ENCODE measurements at regions of chr4 and their contacts with region 1.

Region 1: DNA sequence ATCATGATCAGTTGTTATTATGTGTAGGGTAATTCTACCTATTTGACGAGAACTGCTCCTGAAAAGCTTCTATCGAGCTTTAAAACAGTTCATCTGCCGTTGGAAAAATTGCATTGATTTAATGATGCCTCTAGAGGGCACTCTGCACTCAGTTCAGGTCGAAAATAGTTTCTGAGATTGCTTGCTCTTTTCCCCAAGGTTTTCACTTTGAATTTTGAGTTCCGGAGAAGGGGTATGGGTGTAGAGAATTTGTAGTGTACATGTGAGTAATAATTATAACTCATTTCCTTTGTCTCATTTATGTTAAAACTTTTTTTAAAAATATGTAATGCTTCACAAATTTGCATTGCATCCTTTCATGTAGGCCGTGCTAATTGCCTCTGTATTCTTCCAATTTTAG is 28.4 kb upstream of the TNIP3 start:
- DNase-seq: peak; percentile 37
- H3K4me3 Mint-ChIP-seq: peak overlapping the region; percentile 9
- H3K27ac Mint-ChIP-seq: no peak overlapping the region
- H3K4me1 Mint-ChIP-seq: peaks cover 44% of the 10 kb centered on the region
- H3K27me3 Mint-ChIP-seq: no peaks in the 10 kb centered on the region

Region 2: DNA sequence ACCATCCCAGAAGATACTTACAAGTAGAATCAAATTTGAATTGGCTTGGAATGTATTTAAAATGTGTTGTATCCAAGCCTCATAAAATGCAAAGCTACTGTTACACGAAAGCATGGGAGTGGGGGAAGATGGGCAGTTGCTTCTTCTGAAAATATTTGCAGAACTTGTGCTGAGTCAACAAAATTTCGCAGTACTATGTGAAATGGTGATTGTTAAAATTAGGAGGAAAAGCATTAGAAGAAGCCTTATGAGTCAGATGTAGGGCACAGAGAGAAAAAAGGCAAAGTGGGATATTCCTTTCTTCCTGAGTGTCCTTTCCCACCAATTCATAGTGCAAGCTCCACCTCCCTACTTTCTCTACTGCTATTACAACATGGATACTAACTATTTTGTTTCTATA is 602.7 kb before region 1 on chr4:
- CTCF ChIA-PET with region 1: no interaction called
- intact Hi-C with region 1: no loop called
- DNase-seq: no peak
- H3K4me3 Mint-ChIP-seq: no peak overlapping the region
- H3K27ac Mint-ChIP-seq: no peak overlapping the region
- H3K4me1 Mint-ChIP-seq: no peaks in the 10 kb centered on the region
- H3K27me3 Mint-ChIP-seq: peaks cover 12% of the 10 kb centered on the region

Region 3: DNA sequence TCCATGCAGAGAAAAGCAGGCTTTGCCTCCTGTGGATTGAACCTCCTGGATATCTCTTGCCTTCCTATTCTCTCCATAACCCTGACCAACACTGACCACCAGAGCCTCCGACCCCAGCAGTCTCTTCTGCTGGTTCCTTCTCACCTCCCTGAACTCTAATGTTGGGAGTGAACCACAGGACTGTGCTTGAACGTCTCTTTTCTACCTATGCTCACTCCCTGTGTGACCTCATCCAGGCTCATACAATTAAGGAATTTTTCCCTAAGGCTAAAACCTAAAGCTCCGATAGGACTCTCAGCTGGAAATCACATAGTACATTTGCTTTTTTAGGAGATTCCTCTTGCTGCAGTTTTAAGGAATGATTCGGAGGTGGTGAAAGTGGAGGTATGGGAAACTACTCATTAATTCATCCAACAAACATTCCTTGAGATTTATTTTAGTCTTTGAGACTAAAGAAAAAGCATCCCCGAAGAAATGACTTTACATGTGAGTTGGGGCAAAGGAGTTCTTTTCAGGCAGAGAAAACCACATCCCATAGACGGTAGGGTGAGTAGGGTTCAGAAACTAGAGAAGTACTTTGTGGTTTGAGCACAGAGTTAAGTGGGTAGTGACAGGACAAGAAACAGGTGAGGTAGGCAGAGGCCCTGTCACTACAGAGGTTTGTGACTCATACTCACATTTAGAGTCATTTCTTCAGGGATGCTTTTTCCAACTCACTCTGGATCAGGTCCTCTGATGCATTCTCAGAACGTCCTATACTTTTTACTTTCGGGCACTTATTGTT is 151.0 kb before region 1 on chr4:
- CTCF ChIA-PET with region 1: no interaction called
- intact Hi-C with region 1: loop called (anchors 1 kb)
- DNase-seq: peak; percentile 53
- H3K4me3 Mint-ChIP-seq: no peak overlapping the region
- H3K27ac Mint-ChIP-seq: no peak overlapping the region
- H3K4me1 Mint-ChIP-seq: peaks cover 13% of the 10 kb centered on the region
- H3K27me3 Mint-ChIP-seq: no peaks in the 10 kb centered on the region

Region 4: GRCh38 chr4:121182296-121182695 is 10.2 kb before region 1 on chr4:
- CTCF ChIA-PET with region 1: interaction called, 18 read pairs
- intact Hi-C with region 1: loop called (anchors 1 kb)
- DNase-seq: peak; percentile 30
- H3K4me3 Mint-ChIP-seq: peak overlapping the region; percentile 71
- H3K27ac Mint-ChIP-seq: peak overlapping the region; percentile 91
- H3K4me1 Mint-ChIP-seq: peaks cover 60% of the 10 kb centered on the region
- H3K27me3 Mint-ChIP-seq: no peaks in the 10 kb centered on the region

Region 5: GRCh38 chr4:121243485-121243884 is 51.0 kb after region 1 on chr4:
- CTCF ChIA-PET with region 1: interaction called, 50 read pairs
- intact Hi-C with region 1: no loop called
- DNase-seq: peak; percentile 46
- H3K4me3 Mint-ChIP-seq: peak overlapping the region; percentile 19
- H3K27ac Mint-ChIP-seq: no peak overlapping the region
- H3K4me1 Mint-ChIP-seq: peaks cover 26% of the 10 kb centered on the region
- H3K27me3 Mint-ChIP-seq: no peaks in the 10 kb centered on the region

Region 6: GRCh38 chr4:121278811-121279368 is 86.4 kb after region 1 on chr4:
- CTCF ChIA-PET with region 1: interaction called, 14 read pairs
- intact Hi-C with region 1: loop called (anchors 1 kb)
- DNase-seq: peak; percentile 41
- H3K4me3 Mint-ChIP-seq: no peak overlapping the region
- H3K27ac Mint-ChIP-seq: peak overlapping the region; percentile 66
- H3K4me1 Mint-ChIP-seq: peaks cover 19% of the 10 kb centered on the region
- H3K27me3 Mint-ChIP-seq: peaks cover 5% of the 10 kb centered on the region

Region 7: DNA sequence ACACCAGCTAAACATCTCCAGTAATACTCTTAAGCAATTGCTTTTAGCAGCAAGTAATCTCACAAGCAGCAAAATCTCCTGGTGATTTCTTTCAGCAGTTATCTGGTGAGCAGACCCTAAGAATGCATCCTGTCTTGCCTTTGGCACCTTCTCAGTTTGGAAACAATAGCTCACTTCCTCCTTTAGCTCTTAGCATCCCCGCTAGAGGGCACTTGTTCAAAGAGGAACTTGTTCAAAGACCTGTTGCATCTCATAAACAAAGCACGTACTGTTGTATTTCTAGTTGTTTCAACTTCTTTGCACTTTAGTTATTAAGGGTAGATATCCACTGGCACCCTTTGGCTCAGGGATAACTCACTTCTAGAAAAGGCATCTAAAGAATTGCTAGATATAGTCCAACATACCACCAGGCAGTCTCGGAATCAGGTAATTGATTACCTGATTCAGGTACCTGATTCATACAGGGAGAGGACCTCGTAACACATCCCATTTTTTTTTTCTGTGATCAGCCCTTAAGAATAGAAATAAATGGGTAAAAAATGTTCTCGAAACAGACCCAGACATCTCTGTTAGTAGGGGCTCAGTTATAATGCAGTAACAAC is 270.3 kb after region 1 on chr4:
- CTCF ChIA-PET with region 1: interaction called, 5 read pairs
- intact Hi-C with region 1: loop called (anchors 1 kb)
- DNase-seq: peak; percentile 69
- H3K4me3 Mint-ChIP-seq: no peak overlapping the region
- H3K27ac Mint-ChIP-seq: no peak overlapping the region
- H3K4me1 Mint-ChIP-seq: no peaks in the 10 kb centered on the region
- H3K27me3 Mint-ChIP-seq: peaks cover 20% of the 10 kb centered on the region

Region 8: DNA sequence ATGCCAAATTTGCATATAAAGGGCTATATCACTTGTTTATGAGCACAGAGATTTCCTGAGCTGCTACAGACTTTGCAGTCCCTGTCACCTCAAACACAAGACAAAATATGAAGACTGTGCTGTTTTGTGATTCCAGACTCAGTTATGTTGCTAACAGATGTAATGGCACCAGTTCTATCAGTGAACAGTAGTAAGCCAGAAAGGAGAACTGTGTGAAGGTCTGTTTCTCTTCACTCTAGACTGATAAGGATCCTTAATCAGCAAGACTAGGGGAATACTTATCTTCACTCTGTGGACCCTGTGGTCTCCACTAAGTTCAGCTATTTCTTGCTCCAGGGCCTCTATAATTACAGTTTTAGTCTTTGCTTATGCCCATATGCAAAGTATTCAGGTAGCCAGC is 421.6 kb after region 1 on chr4:
- CTCF ChIA-PET with region 1: no interaction called
- intact Hi-C with region 1: no loop called
- DNase-seq: no peak
- H3K4me3 Mint-ChIP-seq: no peak overlapping the region
- H3K27ac Mint-ChIP-seq: no peak overlapping the region
- H3K4me1 Mint-ChIP-seq: no peaks in the 10 kb centered on the region
- H3K27me3 Mint-ChIP-seq: peaks cover 8% of the 10 kb centered on the region

Region 9: DNA sequence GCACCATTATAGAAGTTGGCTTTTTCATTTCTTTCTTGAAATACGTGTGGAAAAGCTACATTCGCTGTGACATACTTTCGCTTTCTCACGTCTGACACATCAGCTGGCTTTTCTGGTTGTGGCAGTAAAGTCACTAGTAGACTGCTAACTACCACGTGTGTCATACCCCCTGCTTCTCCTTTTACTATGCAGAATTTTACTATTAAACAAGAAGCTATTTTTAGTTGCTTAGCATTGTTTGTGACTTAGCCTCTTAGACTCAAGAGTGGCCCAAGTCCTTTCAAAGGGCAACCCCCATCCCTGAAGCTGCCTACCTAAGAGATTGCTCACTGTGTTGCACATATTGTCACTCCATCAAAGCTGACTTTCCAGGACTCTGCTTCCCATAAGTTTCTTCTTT is 1266.1 kb after region 1 on chr4:
- CTCF ChIA-PET with region 1: no interaction called
- intact Hi-C with region 1: loop called (anchors 10 kb)
- DNase-seq: peak; percentile 82
- H3K4me3 Mint-ChIP-seq: peak overlapping the region; percentile 68
- H3K27ac Mint-ChIP-seq: peak overlapping the region; percentile 99
- H3K4me1 Mint-ChIP-seq: peaks cover 43% of the 10 kb centered on the region
- H3K27me3 Mint-ChIP-seq: no peaks in the 10 kb centered on the region

Measured in activated naive CD4-positive, alpha-beta T cell treated with anti-CD3 and anti-CD28 coated beads for 36 hours (primary cell).